CD4-positive, alpha-beta memory T cell (primary cell): ENCODE measurements at regions of chr19 and their contacts with region 1.

Region 1: DNA sequence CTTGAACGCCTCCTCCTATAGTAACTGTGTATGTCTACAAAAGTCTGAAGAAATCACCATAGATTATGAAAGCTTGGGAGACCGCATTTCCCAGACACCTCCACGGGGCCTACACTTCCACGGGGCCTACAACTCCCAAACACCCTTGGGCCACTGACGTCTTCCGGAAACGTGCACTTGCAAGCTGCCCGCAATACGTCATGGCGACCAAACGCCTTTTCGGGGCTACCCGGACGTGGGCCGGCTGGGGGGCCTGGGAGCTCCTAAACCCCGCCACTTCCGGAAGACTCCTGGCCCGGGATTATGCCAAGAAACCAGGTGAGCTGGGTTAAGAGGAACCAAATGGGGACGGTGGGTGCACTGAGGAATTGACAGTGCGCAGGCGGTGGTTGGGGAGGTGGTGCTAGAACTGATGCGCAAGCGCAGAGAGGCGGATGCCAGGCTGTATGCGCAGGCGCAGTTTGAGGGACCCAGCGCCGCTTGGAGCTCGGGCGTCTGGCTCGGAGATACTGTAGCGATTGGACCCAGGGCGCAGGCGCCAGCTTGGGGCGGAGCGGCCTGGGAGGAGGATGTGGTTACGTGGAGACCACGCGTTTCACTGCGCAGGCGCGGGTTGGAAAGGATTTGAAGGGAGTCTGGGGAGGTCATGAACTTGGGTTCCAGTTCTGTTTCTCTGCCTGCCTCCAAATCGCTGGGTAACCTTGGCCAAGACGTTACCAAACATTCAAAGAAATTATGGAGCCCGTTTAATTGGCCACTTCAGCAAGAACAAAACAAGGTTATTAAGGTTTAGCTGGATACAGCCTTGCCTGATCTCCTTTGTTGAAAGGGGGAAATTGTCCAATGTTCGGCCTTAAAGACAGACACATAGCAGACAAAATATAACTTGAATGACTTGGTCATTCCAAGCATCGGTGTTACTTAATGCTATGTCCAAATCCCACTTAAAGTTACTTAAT is at the start of gene MRPL54:
- DNase-seq: peak; percentile 99 to 100 (median 100)
- H3K4me3 ChIP-seq: peak within 1 kb of the TSS; percentile 91 to 98
- H3K4me3 Mint-ChIP-seq: peak within 1 kb of the TSS; percentile 96 to 99 (median 98)
- H3K27ac ChIP-seq: peak within 1 kb of the TSS; percentile 100
- H3K27ac Mint-ChIP-seq: peak within 1 kb of the TSS; percentile 100
- H3K4me1 ChIP-seq: peaks cover 43% of the 10 kb centered on the region
- H3K4me1 Mint-ChIP-seq: peaks cover 16 to 55% (median 33%) of the 10 kb centered on the region in 4 donors
- H3K27me3 ChIP-seq: no peaks in the 10 kb centered on the region
- H3K27me3 Mint-ChIP-seq: peaks cover 0 to 2% of the 10 kb centered on the region in 2 donors
- total RNA-seq, gene MRPL54: 36.7 to 38.6 TPM

Region 2: DNA sequence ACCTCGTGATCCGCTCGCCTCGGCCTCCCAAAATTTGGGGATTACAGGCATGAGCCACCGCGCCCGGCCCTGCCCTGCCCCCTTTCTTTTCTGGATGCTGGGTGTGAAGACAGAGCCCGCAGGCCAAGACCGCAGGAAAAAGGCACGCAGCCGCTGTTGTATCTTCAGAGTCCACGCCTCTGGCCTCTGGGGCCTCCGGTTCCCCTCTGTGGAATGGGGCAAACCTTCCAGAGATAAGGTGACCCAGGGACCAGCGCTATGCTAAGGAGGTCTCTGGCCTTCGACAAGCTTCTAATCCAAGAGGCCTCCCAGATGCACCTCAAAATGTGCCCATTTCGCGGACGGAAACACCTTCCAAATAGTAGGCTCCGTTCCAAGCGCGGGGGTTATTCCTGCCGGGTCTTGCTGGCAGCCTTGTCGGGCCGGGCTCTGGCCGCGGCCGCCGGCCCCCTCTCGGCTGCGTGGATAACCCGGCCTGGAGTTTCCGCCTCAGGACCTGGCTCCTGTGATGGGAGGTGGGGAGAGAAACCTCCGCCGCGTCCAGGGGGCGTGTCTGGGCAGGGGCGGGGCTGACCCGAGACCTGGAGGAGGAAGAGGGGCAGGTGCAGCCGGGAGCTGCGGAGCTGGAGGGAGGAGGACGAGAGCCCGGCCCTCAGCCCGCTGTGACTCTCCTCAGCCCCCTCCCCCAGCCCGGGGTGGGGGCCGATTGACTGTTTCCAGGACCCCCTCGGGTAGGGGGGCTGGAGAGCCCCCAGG is 41.5 kb before region 1 on chr19:
- CTCF ChIA-PET with region 1: interaction called, 4 read pairs
- POLR2A ChIA-PET with region 1: interaction called, 36 read pairs
- intact Hi-C with region 1: loop called (anchors 1 kb)
- DNase-seq: peak; percentile 88 to 91 (median 89)
- H3K4me3 ChIP-seq: peak overlapping the region; percentile 40 to 57
- H3K4me3 Mint-ChIP-seq: peak overlapping the region; percentile 80 to 88 (median 85)
- H3K27ac ChIP-seq: peak overlapping the region; percentile 9
- H3K27ac Mint-ChIP-seq: peak overlapping the region in 2 of 7 donors; percentile 15 to 75
- H3K4me1 ChIP-seq: peaks cover 22% of the 10 kb centered on the region
- H3K4me1 Mint-ChIP-seq: peaks cover 4 to 24% (median 15%) of the 10 kb centered on the region in 4 donors
- H3K27me3 ChIP-seq: peaks cover 6% of the 10 kb centered on the region
- H3K27me3 Mint-ChIP-seq: peaks cover 0 to 3% of the 10 kb centered on the region in 2 donors

Region 3: DNA sequence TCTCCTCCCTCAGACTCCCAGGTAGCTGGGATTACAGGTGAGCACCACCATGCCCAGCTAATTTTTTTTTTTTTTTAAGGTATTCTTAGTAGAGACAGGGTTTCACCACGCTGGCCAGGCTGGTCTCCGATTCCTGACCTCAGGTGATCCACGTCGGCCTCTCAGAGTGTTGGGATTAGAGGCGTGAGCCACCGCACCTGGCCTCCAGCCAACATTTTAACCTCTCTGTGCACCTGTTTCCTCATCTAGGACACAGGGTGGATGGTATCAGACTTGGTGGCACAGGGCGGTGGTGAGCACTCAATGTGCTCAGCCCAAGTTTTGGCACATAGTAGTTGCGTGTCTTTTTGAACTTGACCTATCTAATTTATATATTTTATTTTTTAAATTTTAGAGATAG is 13.8 kb before region 1 on chr19:
- CTCF ChIA-PET with region 1: interaction called, 15 read pairs
- POLR2A ChIA-PET with region 1: interaction called, 10 read pairs
- intact Hi-C with region 1: no loop called
- DNase-seq: peak in 1 of 5 donors; percentile 13
- H3K4me3 ChIP-seq: no peak overlapping the region
- H3K4me3 Mint-ChIP-seq: no peak overlapping the region
- H3K27ac ChIP-seq: no peak overlapping the region
- H3K27ac Mint-ChIP-seq: no peak overlapping the region
- H3K4me1 ChIP-seq: no peaks in the 10 kb centered on the region
- H3K4me1 Mint-ChIP-seq: peaks cover 0 to 3% (median 0%) of the 10 kb centered on the region in 4 donors
- H3K27me3 ChIP-seq: no peaks in the 10 kb centered on the region
- H3K27me3 Mint-ChIP-seq: no peaks in the 10 kb centered on the region

Region 4: GRCh38 chr19:3798137-3798536 is 35.4 kb after region 1 on chr19:
- CTCF ChIA-PET with region 1: interaction called, 15 read pairs
- POLR2A ChIA-PET with region 1: interaction called, 33 read pairs
- intact Hi-C with region 1: no loop called
- DNase-seq: peak; percentile 47 to 67 (median 57)
- H3K4me3 ChIP-seq: no peak overlapping the region
- H3K4me3 Mint-ChIP-seq: peak overlapping the region in 7 of 8 donors; percentile 48 to 83 (median 67)
- H3K27ac ChIP-seq: no peak overlapping the region
- H3K27ac Mint-ChIP-seq: peak overlapping the region; percentile 18 to 85 (median 59)
- H3K4me1 ChIP-seq: peaks cover 26% of the 10 kb centered on the region
- H3K4me1 Mint-ChIP-seq: peaks cover 18 to 36% (median 23%) of the 10 kb centered on the region in 4 donors
- H3K27me3 ChIP-seq: no peaks in the 10 kb centered on the region
- H3K27me3 Mint-ChIP-seq: no peaks in the 10 kb centered on the region

Region 5: GRCh38 chr19:3821857-3822364 is 59.1 kb after region 1 on chr19:
- CTCF ChIA-PET with region 1: interaction called, 82 read pairs
- POLR2A ChIA-PET with region 1: interaction called, 30 read pairs
- intact Hi-C with region 1: loop called (anchors 1 kb)
- DNase-seq: peak; percentile 82 to 88 (median 85)
- H3K4me3 ChIP-seq: no peak overlapping the region
- H3K4me3 Mint-ChIP-seq: peak overlapping the region in 6 of 8 donors; percentile 41 to 76 (median 58)
- H3K27ac ChIP-seq: no peak overlapping the region
- H3K27ac Mint-ChIP-seq: peak overlapping the region; percentile 42 to 84 (median 61)
- H3K4me1 ChIP-seq: peaks cover 13% of the 10 kb centered on the region
- H3K4me1 Mint-ChIP-seq: peaks cover 7 to 29% (median 16%) of the 10 kb centered on the region in 4 donors
- H3K27me3 ChIP-seq: no peaks in the 10 kb centered on the region
- H3K27me3 Mint-ChIP-seq: no peaks in the 10 kb centered on the region

Region 6: DNA sequence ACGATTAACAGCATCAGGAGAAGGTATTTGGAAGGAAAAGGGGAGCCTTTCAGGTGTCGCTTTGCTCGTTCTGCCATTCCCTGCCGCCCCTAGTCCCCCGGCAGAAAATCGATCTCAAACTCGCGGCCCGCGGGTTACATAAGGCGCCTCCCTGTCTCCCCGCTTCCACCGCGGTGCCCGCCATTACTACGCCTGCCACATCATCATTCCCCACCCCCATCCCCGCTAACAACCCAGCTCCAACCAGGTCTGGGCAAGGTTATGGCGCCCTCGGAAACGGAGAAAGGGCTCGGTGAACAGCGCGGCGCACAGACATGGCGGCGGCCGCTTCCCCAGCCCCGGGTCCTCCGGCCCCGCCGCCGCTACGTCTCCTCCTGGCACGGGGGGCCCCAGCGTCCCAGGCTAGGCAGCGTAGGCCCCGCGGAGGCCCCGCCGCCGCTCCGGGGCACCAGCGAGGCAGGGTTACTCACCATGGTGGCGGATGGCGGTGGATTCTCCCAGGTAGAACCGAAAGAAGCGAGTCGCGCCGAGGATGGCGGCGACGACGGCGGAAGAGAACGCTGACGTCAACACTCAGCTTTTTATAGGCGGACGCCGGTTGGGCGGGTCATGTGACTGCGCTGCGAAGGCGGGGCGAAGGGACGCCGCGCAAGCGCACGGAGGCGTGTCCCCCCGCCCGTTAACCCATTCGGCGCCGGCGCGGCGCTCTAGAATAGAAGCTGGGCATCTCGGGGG is 222.3 kb after region 1 on chr19 and contains the start of gene EEF2:
- CTCF ChIA-PET with region 1: interaction called, 6 read pairs
- POLR2A ChIA-PET with region 1: interaction called, 14 read pairs
- intact Hi-C with region 1: loop called (anchors 2 kb)
- DNase-seq: peak; percentile 91 to 95 (median 94)
- H3K4me3 ChIP-seq: peak within 1 kb of the TSS; percentile 67 to 93
- H3K4me3 Mint-ChIP-seq: peak within 1 kb of the TSS; percentile 96 to 98 (median 97)
- H3K27ac ChIP-seq: peak within 1 kb of the TSS; percentile 91
- H3K27ac Mint-ChIP-seq: peak within 1 kb of the TSS; percentile 94 to 99 (median 97)
- H3K4me1 ChIP-seq: peaks cover 55% of the 10 kb centered on the region
- H3K4me1 Mint-ChIP-seq: peaks cover 20 to 61% (median 41%) of the 10 kb centered on the region in 4 donors
- H3K27me3 ChIP-seq: no peaks in the 10 kb centered on the region
- H3K27me3 Mint-ChIP-seq: no peaks in the 10 kb centered on the region
- total RNA-seq, gene EEF2: 2,286 to 2,389 TPM

Region 7: DNA sequence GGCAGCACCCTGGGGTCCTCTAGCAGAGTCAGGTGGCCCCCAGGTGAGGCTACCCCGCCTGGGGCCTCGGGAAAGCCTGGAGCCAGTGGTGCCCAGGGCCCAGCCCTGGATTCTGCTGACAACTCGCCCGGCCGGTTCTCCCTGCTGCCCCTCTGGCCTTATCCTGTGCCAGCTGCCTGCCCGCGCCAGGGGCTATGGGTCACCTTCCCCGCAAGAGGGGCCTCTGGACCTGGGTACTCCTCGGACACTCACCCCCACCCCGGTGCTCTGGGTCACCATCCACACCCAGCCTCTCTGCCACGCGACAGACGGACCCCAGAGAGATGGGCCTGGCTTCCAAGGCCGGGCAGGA is 279.9 kb after region 1 on chr19:
- CTCF ChIA-PET with region 1: no interaction called
- POLR2A ChIA-PET with region 1: no interaction called
- intact Hi-C with region 1: no loop called
- DNase-seq: peak in 1 of 5 donors; percentile 34
- H3K4me3 ChIP-seq: no peak overlapping the region
- H3K4me3 Mint-ChIP-seq: no peak overlapping the region
- H3K27ac ChIP-seq: no peak overlapping the region
- H3K27ac Mint-ChIP-seq: no peak overlapping the region
- H3K4me1 ChIP-seq: no peaks in the 10 kb centered on the region
- H3K4me1 Mint-ChIP-seq: peaks cover 0 to 9% (median 0%) of the 10 kb centered on the region in 4 donors
- H3K27me3 ChIP-seq: no peaks in the 10 kb centered on the region
- H3K27me3 Mint-ChIP-seq: no peaks in the 10 kb centered on the region